ENCODE measurements at regions of chr16 and their contacts with region 1.

Region 1: DNA sequence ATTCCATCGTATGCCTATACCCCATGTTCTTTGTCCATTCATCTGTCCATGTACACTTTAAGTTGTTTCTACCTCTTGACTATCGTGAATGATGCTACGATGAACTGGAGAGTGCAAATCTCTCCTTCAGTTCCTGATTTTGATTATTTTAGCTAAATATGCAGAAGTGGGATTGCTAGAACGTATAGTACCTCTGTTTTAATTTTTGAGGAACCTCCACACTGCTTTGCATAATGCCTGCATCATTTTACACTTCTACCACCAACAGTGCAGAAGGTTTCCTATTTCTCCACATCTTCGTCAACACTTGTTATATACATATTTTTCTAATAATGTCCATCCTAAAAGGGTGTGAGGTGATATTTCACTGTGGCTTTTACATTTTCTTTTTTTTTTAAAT is 43.9 kb downstream of the SDR42E1 start:
- DNase-seq: no peak
- ATAC-seq: no peak
- H3K4me3 ChIP-seq: no peak overlapping the region
- H3K27ac ChIP-seq: no peak overlapping the region
- H3K4me1 ChIP-seq: no peaks in the 10 kb centered on the region
- H3K27me3 ChIP-seq: no peaks in the 10 kb centered on the region
- CTCF ChIP-seq: no peak

Region 2: DNA sequence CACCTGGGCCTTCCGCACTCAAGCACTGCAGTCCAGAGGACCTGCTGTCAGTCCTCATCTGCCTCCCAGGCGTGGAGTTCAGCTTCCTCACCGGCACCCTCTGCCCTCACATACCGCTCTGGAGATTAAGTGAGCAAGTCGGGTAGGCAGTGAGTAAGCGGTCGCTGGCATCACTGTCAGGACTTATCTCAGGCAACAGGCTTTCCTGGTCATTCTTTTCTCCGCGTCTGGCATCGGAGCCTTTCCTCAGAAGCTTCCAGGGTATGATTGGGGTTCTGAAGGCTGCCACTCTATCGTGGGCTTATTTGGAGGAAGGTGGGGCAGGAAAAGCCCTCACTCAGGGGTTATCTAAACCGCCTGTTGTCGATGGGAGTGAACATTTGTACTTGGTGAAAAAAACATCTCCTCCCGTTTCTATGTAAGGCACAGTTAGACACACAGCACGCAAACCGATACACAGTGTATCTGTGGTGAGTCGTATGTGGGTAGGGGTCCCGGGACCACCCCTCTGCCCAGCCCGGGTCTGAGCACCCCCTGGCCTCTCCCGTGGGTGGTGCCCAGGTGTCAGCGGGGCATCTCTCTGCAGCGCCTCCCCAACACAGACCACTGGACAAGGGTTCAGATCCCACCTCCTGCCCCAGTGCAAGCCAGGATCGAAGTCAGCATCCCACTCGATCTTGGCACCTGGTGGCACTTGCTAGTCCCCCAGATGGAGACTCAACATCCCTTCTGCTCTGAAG is 280.8 kb before region 1 on chr16:
- intact Hi-C with region 1: no loop called
- DNase-seq: no peak
- ATAC-seq: peak in 5 of 8 donors; percentile 20 to 61 (median 34)
- H3K4me3 ChIP-seq: no peak overlapping the region
- H3K27ac ChIP-seq: no peak overlapping the region
- H3K4me1 ChIP-seq: no peaks in the 10 kb centered on the region
- H3K27me3 ChIP-seq: no peaks in the 10 kb centered on the region
- CTCF ChIP-seq: no peak

Region 3: DNA sequence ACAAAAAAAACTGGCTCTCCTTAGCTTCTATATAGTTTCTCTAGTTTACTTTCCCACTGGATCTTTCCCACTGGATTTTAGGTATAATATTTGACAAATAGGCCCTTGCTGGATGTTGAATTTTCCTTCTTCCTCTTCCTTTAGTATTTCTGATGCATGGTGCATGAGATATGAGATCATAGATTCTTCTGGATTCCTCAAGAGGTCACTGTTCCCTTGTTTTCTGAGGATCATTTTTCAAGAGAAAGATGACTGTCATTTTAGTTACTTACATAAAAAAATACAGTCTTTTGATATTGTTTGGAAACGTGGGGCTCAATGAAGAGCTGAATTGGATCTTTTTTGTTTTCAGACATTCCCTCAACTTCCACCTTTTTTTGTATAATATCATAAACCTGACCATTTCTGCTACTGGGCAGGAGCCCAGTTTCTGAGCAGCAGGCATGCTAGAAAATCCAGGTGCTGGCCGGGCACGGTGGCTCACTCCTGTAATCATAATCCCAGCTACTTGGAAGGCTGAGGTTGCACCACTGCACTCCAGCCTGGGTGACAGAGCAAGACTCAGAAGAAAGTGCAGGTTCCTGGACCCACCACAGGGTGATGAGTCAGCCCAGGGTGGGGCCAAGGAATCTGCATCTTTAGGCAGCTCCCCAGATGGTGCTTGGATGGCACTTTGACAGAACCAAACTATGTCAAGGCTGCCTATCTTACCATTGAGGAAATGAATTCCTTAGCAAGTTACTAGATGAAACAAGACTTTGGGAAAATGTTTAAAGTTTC is 26.4 kb before region 1 on chr16:
- intact Hi-C with region 1: no loop called
- DNase-seq: no peak
- ATAC-seq: peak in 1 of 8 donors; percentile 52
- H3K4me3 ChIP-seq: no peak overlapping the region
- H3K27ac ChIP-seq: no peak overlapping the region
- H3K4me1 ChIP-seq: peaks cover 0 to 7% (median 0%) of the 10 kb centered on the region in 9 donors
- H3K27me3 ChIP-seq: peaks cover 0 to 5% (median 0%) of the 10 kb centered on the region in 7 donors
- CTCF ChIP-seq: peak; percentile 9 to 67 (median 55)

Region 4: GRCh38 chr16:83268169-83268568 is 1300.8 kb after region 1 on chr16:
- intact Hi-C with region 1: loop called in 1 of 10 experiments (anchors 5 kb)
- DNase-seq: no peak
- ATAC-seq: peak in 3 of 8 donors; percentile 51 to 79 (median 61)
- H3K4me3 ChIP-seq: no peak overlapping the region
- H3K27ac ChIP-seq: no peak overlapping the region
- H3K4me1 ChIP-seq: no peaks in the 10 kb centered on the region
- H3K27me3 ChIP-seq: no peaks in the 10 kb centered on the region
- CTCF ChIP-seq: no peak

Measured in heart right ventricle (tissue), 16 donors.